IMR-90 (cell line): ENCODE measurements at regions of chr1 and their contacts with region 1.

Region 1: DNA sequence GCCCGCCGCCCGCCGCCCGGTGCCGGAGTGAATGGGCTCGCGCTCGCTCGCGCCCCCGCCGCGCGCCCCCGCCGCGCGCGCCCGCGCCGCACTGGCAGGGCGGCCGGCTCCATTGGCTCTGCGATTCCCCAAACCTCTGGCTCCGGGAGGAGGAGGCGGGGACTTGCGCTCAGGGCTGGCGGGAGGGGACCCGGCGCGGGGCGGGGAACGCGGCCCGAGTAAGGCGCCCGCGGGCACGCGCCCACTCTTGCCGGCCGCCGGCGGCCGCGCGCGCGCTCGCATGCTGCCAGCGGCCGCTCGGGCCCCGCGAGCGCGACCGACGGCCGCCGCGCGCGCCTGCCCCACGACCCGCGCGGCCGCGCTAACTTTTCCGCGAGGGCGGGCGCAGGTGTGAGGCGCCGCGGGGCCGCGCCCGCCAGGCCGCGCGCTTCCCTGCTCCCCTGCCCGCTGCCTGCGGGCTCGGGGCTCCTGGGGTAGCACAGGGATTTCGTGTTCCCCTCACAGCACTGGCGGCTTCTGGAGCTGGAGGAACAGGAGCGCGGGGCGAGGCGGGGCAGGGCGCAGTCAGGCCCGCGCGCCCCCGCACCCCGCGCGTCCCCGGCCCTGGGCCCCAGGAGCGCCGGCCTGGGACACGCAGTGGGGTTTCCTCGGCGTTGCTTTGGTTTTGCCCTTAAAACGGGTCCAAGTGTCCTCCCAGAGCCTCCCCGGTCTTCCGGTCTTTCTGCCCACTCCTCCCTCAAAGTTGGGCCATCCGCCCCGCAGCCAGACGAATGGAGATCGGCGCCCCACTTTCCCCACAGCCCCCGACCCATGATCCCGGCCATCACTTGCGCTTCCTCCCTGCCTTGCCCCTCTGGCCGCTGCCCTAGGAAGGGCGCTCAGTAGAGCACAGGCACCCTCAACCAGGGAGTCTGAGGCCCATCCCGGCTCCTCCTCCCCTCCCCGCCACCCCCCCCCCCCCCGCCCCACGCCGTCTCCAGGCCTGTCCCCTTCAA is 101.5 kb downstream of the CASZ1 start:
- DNase-seq: peak; percentile 74
- ATAC-seq: peak; percentile 94
- H3K4me3 ChIP-seq: peak overlapping the region; percentile 67
- H3K27ac ChIP-seq: no peak overlapping the region
- H3K4me1 ChIP-seq: no peaks in the 10 kb centered on the region; the same call in 1 of the 2 replicates
- H3K27me3 ChIP-seq: peaks cover 32% of the 10 kb centered on the region
- CTCF ChIP-seq: no peak
- POLR2A ChIP-seq: no peak
- RAD21 ChIP-seq: no peak

Region 2: GRCh38 chr1:10714337-10715114 is 19.6 kb after region 1 on chr1:
- CTCF ChIA-PET with region 1: no interaction called
- POLR2A ChIA-PET with region 1: no interaction called
- dilution Hi-C with region 1: no loop called
- in situ Hi-C with region 1: no loop called
- intact Hi-C with region 1: no loop called
- DNase-seq: no peak
- ATAC-seq: no peak
- H3K4me3 ChIP-seq: no peak overlapping the region
- H3K27ac ChIP-seq: no peak overlapping the region
- H3K4me1 ChIP-seq: no peaks in the 10 kb centered on the region
- H3K27me3 ChIP-seq: peaks cover 52% of the 10 kb centered on the region; the same call in 1 of the 2 replicates
- CTCF ChIP-seq: no peak
- POLR2A ChIP-seq: no peak
- RAD21 ChIP-seq: no peak

Region 3: DNA sequence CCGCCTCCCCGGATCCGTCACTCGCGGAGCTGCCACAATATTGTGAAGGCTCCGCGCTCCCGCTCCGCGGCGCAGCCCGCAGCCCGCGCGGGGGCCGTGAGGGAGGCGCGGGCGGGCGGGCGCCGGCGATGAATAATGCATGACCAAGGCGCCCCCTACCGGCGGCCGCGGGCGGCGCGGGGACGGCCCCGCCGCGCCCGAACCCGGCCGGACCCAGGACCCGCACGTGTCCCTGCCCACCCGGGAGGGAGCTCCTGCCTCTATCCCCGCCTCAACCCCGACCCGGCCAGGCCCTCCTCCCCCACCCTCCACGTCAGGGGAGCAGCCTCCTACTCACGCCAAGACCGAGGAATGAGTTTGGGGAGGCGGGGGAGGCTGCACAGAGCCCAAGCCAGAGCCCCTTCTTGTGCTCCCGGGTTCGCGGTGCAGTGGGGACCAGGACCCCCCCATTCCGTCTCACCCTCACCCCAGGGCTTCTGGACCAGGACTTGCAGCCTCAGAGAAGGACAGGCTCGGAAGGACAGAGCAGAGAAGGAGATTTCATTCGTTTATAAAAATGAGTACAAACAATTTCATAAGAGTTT is 172.3 kb after region 1 on chr1:
- CTCF ChIA-PET with region 1: no interaction called
- POLR2A ChIA-PET with region 1: no interaction called
- dilution Hi-C with region 1: no loop called
- in situ Hi-C with region 1: no loop called
- intact Hi-C with region 1: loop called (anchors 10 kb)
- DNase-seq: peak; percentile 18
- ATAC-seq: peak; percentile 98
- H3K4me3 ChIP-seq: peak overlapping the region; percentile 36
- H3K27ac ChIP-seq: no peak overlapping the region; the same call in 1 of the 2 replicates
- H3K4me1 ChIP-seq: peaks cover 7% of the 10 kb centered on the region
- H3K27me3 ChIP-seq: peaks cover 60% of the 10 kb centered on the region
- CTCF ChIP-seq: peak; percentile 87
- POLR2A ChIP-seq: no peak; the same call in 1 of the 2 replicates
- RAD21 ChIP-seq: peak; percentile 81